ENCODE measurements at regions of chr2 and their contacts with region 1.

Region 1: DNA sequence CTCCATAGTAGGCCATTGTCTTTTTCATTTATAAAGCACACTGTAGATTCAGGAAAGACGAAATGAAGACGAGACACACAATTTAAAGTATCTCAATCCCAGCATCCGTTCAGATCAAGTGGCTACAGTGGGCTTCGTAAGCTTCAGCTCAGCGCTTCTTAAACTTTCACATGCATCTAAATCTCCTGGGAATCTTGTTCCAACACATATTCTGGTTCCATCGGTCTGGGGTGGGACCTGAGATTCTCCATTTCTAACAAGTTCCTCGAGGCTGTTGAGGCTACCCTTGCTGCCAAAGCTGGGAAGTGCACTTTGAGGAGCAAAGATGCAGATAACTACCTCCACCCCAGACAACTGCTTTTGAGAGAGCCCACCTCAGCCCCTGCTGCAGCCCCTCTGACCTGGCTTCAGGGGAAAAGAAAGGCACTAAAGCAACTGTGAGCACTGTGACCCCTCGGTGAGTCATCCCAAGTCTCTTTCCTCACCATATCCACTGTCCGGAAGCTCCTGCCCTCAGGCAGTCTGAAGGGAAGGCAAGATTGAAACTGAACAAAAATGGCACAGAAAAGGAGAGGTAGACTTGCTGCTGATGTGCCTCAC is 201.1 kb upstream of the FBXO11 start:
- DNase-seq: no peak
- H3K4me3 ChIP-seq: 0 out of 4 replicates have a peak overlapping the region, but pooled peaks of 1 of the 2 experiments have one; percentile 32
- H3K27ac ChIP-seq: peak overlapping the region; percentile 71 to 96
- H3K4me1 ChIP-seq: peaks cover 18 to 24% of the 10 kb centered on the region in 2 experiments
- H3K27me3 ChIP-seq: no peaks in the 10 kb centered on the region
- CTCF ChIP-seq: peak; percentile 22; the same call in 1 of the 2 replicates
- EP300 ChIP-seq: no peak
- RAD21 ChIP-seq: no peak

Region 2: DNA sequence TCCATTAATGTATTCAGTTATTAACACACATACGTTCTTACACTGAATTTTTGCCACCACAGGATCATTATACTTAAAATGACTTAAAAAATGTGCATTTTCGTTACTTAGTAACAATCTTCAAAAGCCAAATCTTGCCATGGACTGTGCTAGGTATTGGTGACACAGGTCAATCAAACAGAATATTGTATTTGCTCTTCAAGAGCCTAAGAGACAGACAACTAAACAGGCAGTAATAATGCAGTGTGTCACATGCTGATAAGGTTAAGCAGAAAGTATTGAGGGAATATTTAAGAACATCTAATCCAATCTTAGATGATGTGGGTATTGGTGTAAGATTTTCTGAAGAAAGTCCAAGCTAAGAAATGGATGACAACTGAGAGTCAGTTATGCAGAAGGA is 258.1 kb before region 1 on chr2:
- CTCF ChIA-PET with region 1: interaction called, 13 read pairs
- POLR2A ChIA-PET with region 1: no interaction called
- DNase-seq: no peak
- H3K4me3 ChIP-seq: no peak overlapping the region
- H3K27ac ChIP-seq: no peak overlapping the region
- H3K4me1 ChIP-seq: peaks cover 2 to 15% of the 10 kb centered on the region in 2 experiments; a peak in 2 of 4 replicates
- H3K27me3 ChIP-seq: no peaks in the 10 kb centered on the region
- CTCF ChIP-seq: no peak
- EP300 ChIP-seq: no peak
- RAD21 ChIP-seq: no peak

Region 3: DNA sequence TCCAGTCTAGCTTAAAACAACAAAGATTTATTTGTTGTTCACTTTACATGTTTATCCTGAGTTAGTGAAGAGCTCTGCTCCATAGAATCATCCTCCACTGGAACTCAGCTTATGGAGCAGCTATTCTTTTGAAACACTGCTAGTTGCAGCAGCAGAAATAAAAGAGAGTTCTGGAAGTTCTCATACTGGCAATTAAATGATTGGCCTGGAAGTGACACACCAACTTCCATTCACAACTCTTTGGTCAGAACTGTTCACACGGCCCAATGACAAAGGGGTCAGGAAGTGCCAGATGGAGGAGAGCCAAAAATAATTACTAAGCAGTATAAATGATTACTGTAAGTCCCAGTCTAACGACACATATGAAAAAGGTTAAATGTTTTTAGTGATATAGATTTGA is 240.2 kb before region 1 on chr2:
- CTCF ChIA-PET with region 1: interaction called, 14 read pairs
- POLR2A ChIA-PET with region 1: no interaction called
- DNase-seq: peak; percentile 56
- H3K4me3 ChIP-seq: no peak overlapping the region
- H3K27ac ChIP-seq: peak overlapping the region; percentile 70 to 76
- H3K4me1 ChIP-seq: peaks cover 16 to 29% of the 10 kb centered on the region in 2 experiments
- H3K27me3 ChIP-seq: no peaks in the 10 kb centered on the region
- CTCF ChIP-seq: no peak
- EP300 ChIP-seq: peak in 1 of 2 experiments; percentile 89; a peak in 2 of 4 replicates
- RAD21 ChIP-seq: 0 out of 2 replicates have a peak, but pooled peaks have one; percentile 4

Region 4: DNA sequence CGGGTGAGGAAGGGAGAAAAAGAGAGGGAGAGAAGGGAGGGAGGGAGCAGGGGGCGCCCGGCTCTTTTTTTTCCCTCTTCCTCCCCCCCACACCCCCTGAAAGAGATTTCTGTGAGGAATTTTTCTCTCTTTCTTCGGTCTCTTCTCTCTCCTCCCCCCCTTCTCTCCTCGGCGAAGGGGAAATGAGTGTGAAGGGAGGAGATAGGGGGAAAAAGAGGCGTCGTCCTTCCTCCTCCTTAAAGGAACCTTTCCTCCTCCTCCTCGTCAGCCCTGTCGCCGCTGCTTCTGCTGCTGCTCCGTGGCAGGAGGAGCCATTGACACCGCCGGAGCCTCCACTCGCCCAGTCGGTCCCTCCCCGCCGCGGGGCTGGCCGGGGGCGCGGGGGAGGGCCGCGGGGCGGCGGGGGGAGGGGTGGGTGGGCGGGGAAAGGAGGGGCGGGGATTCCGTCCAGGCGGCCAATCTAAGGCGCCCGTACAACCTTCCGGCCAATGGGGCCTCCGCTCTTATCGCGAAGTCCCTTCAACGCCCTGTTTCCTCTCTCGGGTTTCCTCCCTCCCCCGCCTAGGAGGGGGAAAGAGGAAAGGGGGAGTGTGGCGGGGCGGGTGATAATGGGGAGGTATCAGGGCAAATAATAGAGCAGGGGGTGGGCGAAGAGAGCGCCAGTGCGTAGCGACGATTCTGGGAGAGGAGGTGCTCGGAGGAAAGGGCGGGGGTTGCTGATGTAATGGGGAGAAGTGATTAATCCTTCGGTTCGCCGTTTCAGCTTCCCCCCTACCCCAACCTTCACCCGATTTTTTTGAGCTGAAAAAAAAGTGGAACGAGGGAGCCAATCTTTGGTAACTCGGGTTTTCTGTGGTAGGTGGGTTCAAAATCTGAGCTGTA is 201.0 kb before region 1 on chr2 and contains the start of gene FBXO11:
- CTCF ChIA-PET with region 1: interaction called, 24 read pairs
- POLR2A ChIA-PET with region 1: interaction called, 4 read pairs
- DNase-seq: peak; percentile 94
- H3K4me3 ChIP-seq: peak within 1 kb of the TSS; percentile 74 to 98
- H3K27ac ChIP-seq: peak within 1 kb of the TSS; percentile 96 to 100
- H3K4me1 ChIP-seq: peaks cover 7 to 14% of the 10 kb centered on the region in 2 experiments; a peak in 2 of 4 replicates
- H3K27me3 ChIP-seq: no peaks in the 10 kb centered on the region
- CTCF ChIP-seq: peak; percentile 79
- EP300 ChIP-seq: peak in 1 of 2 experiments; percentile 7; a peak in 1 of 4 replicates
- RAD21 ChIP-seq: no peak; the same call in none of the 2 replicates
- polyA plus RNA-seq, gene FBXO11: 26.6 and 29.0 TPM in 2 replicates

Region 5: GRCh38 chr2:48089644-48090043 is 17.8 kb before region 1 on chr2:
- CTCF ChIA-PET with region 1: interaction called, 11 read pairs
- POLR2A ChIA-PET with region 1: no interaction called
- DNase-seq: no peak
- H3K4me3 ChIP-seq: no peak overlapping the region
- H3K27ac ChIP-seq: no peak overlapping the region
- H3K4me1 ChIP-seq: no peaks in the 10 kb centered on the region
- H3K27me3 ChIP-seq: no peaks in the 10 kb centered on the region
- CTCF ChIP-seq: no peak
- EP300 ChIP-seq: no peak
- RAD21 ChIP-seq: no peak

Region 6: DNA sequence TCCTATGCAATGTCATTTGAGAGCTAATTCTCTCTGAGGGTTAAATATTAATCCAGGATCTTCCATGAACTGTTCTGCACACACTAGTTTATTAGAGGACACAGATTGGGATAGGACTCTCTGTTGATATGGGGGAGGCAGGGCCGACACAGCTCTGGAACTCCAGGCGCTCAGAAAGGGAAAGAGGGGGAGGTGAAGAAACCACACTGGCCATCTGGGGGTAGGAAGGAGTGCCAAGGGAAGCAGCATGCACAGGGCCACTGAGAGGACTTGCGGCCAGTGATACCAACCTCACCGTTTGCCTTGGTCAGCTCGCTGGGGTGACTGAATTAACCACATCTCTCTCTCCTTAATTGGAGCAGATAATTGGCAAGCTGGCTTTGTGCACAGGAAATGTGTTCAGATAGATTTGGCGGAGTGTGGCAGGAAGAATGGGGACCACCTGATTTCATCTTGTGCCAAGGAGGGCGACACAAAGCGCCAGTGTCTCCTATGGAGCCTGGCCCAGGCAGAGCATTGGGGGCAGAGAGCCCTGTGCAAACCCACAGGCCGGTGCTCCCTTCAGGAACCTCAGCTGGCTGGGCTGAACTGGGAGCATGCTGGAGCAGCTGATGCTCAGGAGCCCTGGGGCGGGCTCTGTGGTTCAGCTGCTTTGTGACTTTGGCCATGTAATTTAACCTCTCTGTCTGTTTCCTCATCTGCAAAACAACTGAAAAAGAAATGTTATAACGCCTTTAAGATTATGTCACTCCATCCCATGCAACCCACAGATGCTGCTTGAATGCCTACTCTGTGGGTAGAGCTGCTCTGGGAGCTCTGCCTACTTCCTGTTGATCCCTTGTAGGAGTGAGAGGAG is 307.8 kb after region 1 on chr2:
- CTCF ChIA-PET with region 1: interaction called, 56 read pairs
- POLR2A ChIA-PET with region 1: no interaction called
- DNase-seq: peak; percentile 44
- H3K4me3 ChIP-seq: no peak overlapping the region
- H3K27ac ChIP-seq: no peak overlapping the region
- H3K4me1 ChIP-seq: peaks cover 1 to 17% of the 10 kb centered on the region in 2 experiments; a peak in 3 of 4 replicates
- H3K27me3 ChIP-seq: no peaks in the 10 kb centered on the region
- CTCF ChIP-seq: no peak
- EP300 ChIP-seq: no peak
- RAD21 ChIP-seq: no peak

Region 7: GRCh38 chr2:48420512-48421197 is 313.2 kb after region 1 on chr2:
- CTCF ChIA-PET with region 1: interaction called, 56 read pairs
- POLR2A ChIA-PET with region 1: no interaction called
- DNase-seq: peak; percentile 92
- H3K4me3 ChIP-seq: peak overlapping the region; percentile 6 to 19; a peak in 2 of 4 replicates
- H3K27ac ChIP-seq: peak overlapping the region in 1 of 2 experiments; percentile 73; a peak in 2 of 4 replicates
- H3K4me1 ChIP-seq: peaks cover 9 to 13% of the 10 kb centered on the region in 2 experiments; a peak in 3 of 4 replicates
- H3K27me3 ChIP-seq: no peaks in the 10 kb centered on the region
- CTCF ChIP-seq: peak; percentile 99
- EP300 ChIP-seq: no peak
- RAD21 ChIP-seq: peak; percentile 100

Region 8: GRCh38 chr2:48496849-48497248 is 389.4 kb after region 1 on chr2:
- CTCF ChIA-PET with region 1: no interaction called
- POLR2A ChIA-PET with region 1: no interaction called
- DNase-seq: no peak
- H3K4me3 ChIP-seq: no peak overlapping the region
- H3K27ac ChIP-seq: peak overlapping the region in 1 of 2 experiments; percentile 55; a peak in 2 of 4 replicates
- H3K4me1 ChIP-seq: no peaks in the 10 kb centered on the region
- H3K27me3 ChIP-seq: no peaks in the 10 kb centered on the region
- CTCF ChIP-seq: no peak
- EP300 ChIP-seq: no peak
- RAD21 ChIP-seq: no peak